T-cell (primary cell): ENCODE measurements at regions of chrX and their contacts with region 1.

Region 1: DNA sequence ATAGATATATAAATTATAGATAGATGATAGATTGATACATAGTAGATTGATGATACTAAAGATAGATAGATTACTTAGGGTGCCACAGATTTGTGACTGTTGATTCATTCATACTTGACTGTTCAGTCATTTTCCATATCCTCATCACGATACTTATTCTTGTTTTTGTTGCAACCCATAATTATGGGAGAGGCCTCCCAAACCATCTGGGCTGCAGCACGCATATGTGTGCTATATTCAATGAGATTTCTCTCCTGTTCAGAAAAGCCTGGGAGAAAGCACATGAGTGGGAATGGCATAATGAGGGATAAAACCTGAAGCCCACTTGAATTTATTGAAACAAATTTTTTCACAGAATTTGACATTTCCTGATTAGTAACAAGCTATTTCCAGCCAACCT is 346.4 kb upstream of the PRKX start:
- DNase-seq: no peak
- ATAC-seq: no peak
- H3K4me3 ChIP-seq: no peak overlapping the region
- H3K4me3 Mint-ChIP-seq: no peak overlapping the region
- H3K27ac ChIP-seq: no peak overlapping the region
- H3K27ac Mint-ChIP-seq: no peak overlapping the region
- H3K4me1 ChIP-seq: no peaks in the 10 kb centered on the region
- H3K4me1 Mint-ChIP-seq: no peaks in the 10 kb centered on the region
- H3K27me3 ChIP-seq: no peaks in the 10 kb centered on the region
- H3K27me3 Mint-ChIP-seq: no peaks in the 10 kb centered on the region

Region 2: DNA sequence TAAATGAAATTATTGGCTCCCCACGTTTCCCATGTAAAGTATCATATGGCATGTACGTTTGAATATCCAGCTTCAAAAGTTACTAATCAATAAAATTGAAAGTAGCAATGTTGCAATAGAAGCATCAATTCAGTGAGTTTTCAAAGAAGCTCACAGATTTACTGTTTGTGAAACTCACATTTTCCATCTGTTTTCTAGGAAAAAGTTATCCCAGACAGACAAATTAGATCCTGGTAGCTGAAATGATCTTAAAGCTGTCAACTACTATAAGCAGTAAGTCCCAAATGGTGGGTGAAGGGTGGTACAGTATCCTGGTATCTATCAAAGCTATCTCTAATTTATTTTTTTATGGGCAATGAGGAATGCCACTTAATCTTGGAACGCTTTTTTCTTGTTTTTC is 652.8 kb before region 1 on chrX:
- CTCF ChIA-PET with region 1: interaction called in 1 of 2 experiments, 12 read pairs
- POLR2A ChIA-PET with region 1: no interaction called
- DNase-seq: no peak
- ATAC-seq: no peak
- H3K4me3 ChIP-seq: no peak overlapping the region
- H3K4me3 Mint-ChIP-seq: no peak overlapping the region
- H3K27ac ChIP-seq: no peak overlapping the region
- H3K27ac Mint-ChIP-seq: no peak overlapping the region
- H3K4me1 ChIP-seq: no peaks in the 10 kb centered on the region
- H3K4me1 Mint-ChIP-seq: no peaks in the 10 kb centered on the region
- H3K27me3 ChIP-seq: no peaks in the 10 kb centered on the region
- H3K27me3 Mint-ChIP-seq: peaks cover 0 to 17% of the 10 kb centered on the region in 2 donors

Region 3: GRCh38 chrX:3968749-3969148 is 91.1 kb before region 1 on chrX:
- CTCF ChIA-PET with region 1: no interaction called
- POLR2A ChIA-PET with region 1: no interaction called
- DNase-seq: no peak
- ATAC-seq: no peak
- H3K4me3 ChIP-seq: no peak overlapping the region
- H3K4me3 Mint-ChIP-seq: no peak overlapping the region
- H3K27ac ChIP-seq: no peak overlapping the region
- H3K27ac Mint-ChIP-seq: no peak overlapping the region
- H3K4me1 ChIP-seq: no peaks in the 10 kb centered on the region
- H3K4me1 Mint-ChIP-seq: peaks cover 0 to under 1% (median 0%) of the 10 kb centered on the region in 3 donors
- H3K27me3 ChIP-seq: peaks cover 0 to 2% of the 10 kb centered on the region in 2 experiments
- H3K27me3 Mint-ChIP-seq: peaks cover 8 to 14% of the 10 kb centered on the region in 2 donors